Motor neuron (in vitro differentiated cells): ENCODE measurements at regions of chr3 and their contacts with region 1.

Region 1: GRCh38 chr3:27681245-27681748 is 40.8 kb downstream of the EOMES start:
- ATAC-seq: peak in 5 of 8 experiments; percentile 39 to 74 (median 62)
- H3K4me3 ChIP-seq: no peak overlapping the region
- H3K27ac ChIP-seq: no peak overlapping the region
- H3K4me1 ChIP-seq: no peaks in the 10 kb centered on the region

Region 2: GRCh38 chr3:27312044-27312668 is 369.1 kb before region 1 on chr3:
- in situ Hi-C with region 1: loop called in 3 of 9 experiments (anchors 25 kb)
- ATAC-seq: peak in 5 of 8 experiments; percentile 25 to 85 (median 81)
- H3K4me3 ChIP-seq: no peak overlapping the region
- H3K27ac ChIP-seq: no peak overlapping the region
- H3K4me1 ChIP-seq: no peaks in the 10 kb centered on the region

Region 3: DNA sequence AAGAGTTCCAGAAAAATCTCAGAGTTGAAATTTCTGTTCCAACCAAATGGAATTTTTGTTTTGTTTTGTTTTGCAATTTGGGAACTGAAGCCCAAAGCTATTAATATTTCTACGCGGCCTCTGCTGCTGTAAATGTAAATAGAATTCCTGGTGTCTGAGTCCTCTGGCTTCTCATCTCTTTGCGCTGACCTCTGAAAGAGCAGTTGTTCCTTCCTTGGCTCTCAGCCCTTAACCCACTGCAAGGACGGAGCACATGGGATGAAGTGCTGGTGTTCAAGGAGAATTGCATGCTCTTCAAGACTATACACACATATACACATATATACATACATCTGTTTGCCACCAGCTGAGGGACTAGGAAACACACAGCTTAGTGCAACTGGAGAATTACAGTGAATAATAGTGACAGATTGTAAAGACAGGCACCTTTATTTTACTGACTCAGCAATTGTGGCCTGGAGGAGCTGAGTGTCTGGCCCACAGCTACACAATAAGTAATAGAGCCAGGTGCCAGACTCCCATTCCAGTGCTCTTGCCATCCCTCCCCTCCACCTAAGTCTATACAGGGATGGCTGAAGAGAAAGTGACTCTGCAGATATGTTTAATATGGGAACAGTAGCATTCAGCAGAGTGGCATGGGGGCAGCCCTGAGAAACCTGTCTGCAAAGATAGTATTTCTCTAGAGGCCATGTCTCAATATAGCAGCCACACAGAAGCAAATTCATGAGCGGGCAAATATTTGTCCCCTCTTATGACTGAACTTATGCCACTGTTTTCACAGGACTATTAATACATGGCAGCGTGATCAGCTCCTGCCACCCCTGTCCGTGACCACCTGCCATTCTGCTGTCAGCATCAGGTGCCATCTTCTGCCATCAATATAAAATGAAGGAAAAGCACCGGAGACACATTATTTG is 354.4 kb before region 1 on chr3:
- in situ Hi-C with region 1: loop called in 4 of 9 experiments (anchors 25 kb)
- ATAC-seq: peak in 3 of 8 experiments; percentile 86 to 92 (median 89)
- H3K4me3 ChIP-seq: no peak overlapping the region
- H3K27ac ChIP-seq: no peak overlapping the region
- H3K4me1 ChIP-seq: no peaks in the 10 kb centered on the region

Region 4: GRCh38 chr3:27357665-27358258 is 323.5 kb before region 1 on chr3:
- in situ Hi-C with region 1: loop called in 1 of 9 experiments (anchors 25 kb)
- ATAC-seq: peak in 4 of 8 experiments; percentile 72 to 91 (median 81)
- H3K4me3 ChIP-seq: no peak overlapping the region
- H3K27ac ChIP-seq: no peak overlapping the region
- H3K4me1 ChIP-seq: no peaks in the 10 kb centered on the region